ENCODE measurements at regions of chr15 and their contacts with region 1.

Region 1: DNA sequence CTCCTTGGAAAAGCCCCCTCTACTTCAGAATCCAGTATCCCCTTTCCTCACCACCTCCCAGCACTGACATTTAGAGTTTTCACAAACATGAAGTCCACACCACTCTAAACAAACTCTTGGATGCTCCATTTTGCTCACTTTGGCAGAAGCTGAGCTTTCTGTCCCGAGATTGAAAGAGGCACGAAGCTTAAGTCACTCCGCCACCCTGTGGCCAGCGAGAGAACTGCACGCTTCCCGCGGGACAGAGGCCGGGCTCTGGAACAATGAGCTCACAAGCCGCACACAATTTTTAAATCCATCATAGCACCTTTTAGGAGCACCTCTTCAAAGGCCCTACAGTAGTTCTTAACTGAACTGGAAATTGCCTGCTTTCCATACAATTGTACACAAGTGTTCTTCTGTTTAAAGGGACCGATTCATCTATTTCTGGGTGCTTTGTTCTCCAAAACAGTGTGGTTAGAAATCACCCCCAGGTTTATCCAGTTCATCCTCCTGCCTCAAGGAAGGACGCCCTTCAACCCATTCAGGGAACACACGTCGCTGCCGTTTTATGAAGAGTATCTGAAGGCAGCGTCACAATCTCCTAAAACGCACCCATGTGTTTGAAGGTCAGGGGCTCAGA is 226.1 kb downstream of the VPS13C start:
- DNase-seq: no peak

Region 2: GRCh38 chr15:60507596-60508424 is 1326.4 kb before region 1 on chr15:
- intact Hi-C with region 1: loop called (anchors 5 kb)
- DNase-seq: no peak

Region 3: GRCh38 chr15:60585743-60586708 is 1248.2 kb before region 1 on chr15:
- intact Hi-C with region 1: loop called (anchors 5 kb)
- DNase-seq: no peak

Region 4: DNA sequence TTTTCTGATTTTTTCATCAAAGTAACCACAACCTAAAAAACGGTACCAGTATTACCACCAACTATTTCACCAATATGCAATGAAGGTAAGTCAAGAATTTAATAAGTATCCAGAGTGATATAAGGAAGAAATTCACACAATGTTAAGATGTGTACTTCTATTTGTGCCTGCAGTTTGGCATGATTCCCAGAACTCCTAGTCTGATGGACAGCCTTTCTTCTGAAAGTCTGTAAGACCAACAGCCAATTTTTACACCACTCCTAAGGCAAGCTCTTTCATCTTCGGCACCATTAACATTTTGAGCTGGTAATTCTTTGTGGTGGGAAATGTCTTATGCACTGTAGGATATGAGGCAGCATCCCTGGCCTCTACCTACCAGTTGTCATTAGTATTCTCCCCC is 117.8 kb after region 1 on chr15:
- intact Hi-C with region 1: no loop called
- DNase-seq: no peak

Region 5: DNA sequence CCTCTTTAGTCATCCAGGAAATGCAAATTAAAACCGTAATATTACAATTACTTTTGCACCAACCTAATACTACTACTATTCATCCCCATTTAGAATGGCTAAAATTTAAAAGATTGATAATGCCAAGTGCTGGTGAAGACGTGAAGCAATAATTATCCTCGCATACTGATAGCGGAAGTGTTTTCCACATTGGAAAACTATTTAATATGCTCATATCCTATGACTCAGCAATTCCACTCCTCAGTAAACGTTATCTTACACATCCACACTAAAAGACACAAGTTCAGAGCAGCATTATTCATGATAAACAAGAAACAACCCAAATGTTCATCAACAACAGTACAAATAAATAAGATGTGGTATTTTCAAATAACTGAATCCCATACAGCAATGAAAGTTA is 155.5 kb after region 1 on chr15:
- intact Hi-C with region 1: no loop called
- DNase-seq: no peak